Naive thymus-derived CD4-positive, alpha-beta T cell (primary cell): ENCODE measurements at regions of chr20 and their contacts with region 1.

Region 1: DNA sequence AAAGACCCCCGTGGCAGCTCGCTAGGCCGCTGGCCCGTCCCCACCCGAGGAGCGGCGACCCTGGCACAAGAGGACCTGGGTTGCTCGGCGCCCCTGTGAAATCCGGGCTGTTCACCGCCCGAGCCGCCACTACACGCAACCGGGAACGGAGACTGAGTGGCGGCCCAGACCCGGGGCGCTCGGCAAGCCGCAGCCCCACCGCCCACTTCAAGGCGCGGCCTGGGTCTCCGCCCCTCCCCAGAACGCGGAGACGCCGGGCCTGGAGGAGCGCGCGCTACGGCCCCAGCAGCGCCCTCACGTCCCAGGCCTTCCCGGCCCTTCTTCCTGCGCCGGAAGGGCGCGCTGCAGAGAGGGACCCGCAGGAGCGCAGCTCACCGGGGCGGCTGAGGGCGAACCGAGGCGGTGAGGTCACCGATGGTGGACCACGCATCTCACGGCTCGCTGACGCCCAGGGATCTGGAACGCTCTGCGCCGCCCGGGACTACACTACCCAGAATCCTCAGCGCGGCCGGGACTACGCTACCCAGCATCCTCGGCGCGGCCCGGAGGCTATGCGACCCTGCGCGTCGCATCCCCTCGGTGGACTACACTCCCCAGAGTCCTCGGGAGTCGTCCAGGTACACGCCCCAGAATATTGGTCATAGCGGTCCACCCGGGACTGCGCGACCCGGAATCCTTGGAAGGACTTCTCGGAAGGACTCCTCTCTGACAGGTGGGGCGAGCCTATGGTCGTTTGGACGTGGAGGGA is at the start of gene ZNF337:
- DNase-seq: peak; percentile 84 to 94 (median 89)
- ATAC-seq: peak; percentile 100
- H3K4me3 ChIP-seq: peak within 1 kb of the TSS; percentile 85
- H3K4me3 Mint-ChIP-seq: peak within 1 kb of the TSS; percentile 94 to 97 (median 96)
- H3K27ac ChIP-seq: peak within 1 kb of the TSS; percentile 85
- H3K27ac Mint-ChIP-seq: peak within 1 kb of the TSS; percentile 84 to 96 (median 93)
- H3K4me1 ChIP-seq: peaks cover 5 to 9% of the 10 kb centered on the region in 2 donors
- H3K4me1 Mint-ChIP-seq: peaks cover 19 to 58% (median 57%) of the 10 kb centered on the region in 7 donors
- H3K27me3 ChIP-seq: no peaks in the 10 kb centered on the region
- H3K27me3 Mint-ChIP-seq: peaks cover 0 to 5% (median 0%) of the 10 kb centered on the region in 5 donors
- total RNA-seq, gene ZNF337: 18.7 to 39.8 (median 21.2) TPM

Region 2: DNA sequence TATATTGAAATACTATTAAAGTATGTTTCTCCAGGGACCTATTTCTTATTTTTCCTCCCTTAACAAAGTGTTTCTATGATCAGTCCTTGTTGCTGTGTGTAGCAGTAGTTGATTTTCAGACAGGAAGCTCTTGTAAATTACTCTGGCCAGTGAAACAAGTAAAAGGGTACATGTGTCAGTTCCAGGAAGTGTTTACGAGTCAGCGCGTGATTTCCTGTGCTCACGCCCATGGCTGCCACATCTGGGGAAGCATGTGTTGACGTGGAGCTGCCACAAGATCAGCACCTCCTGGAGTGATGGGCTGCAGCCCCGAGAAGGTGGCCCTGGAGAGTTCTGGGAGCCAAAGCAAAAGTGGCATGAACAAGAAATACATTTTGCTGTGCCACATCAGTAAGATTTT is 1669.3 kb before region 1 on chr20:
- CTCF ChIA-PET with region 1: no interaction called
- POLR2A ChIA-PET with region 1: no interaction called
- intact Hi-C with region 1: loop called in 1 of 2 experiments (anchors 5 kb)
- DNase-seq: peak; percentile 45 to 93 (median 87)
- ATAC-seq: peak; percentile 99
- H3K4me3 ChIP-seq: peak overlapping the region; percentile 39
- H3K4me3 Mint-ChIP-seq: peak overlapping the region; percentile 26 to 81 (median 71)
- H3K27ac ChIP-seq: peak overlapping the region; percentile 83
- H3K27ac Mint-ChIP-seq: peak overlapping the region; percentile 95 to 99 (median 97)
- H3K4me1 ChIP-seq: peaks cover 17 to 29% of the 10 kb centered on the region in 2 donors
- H3K4me1 Mint-ChIP-seq: peaks cover 20 to 76% (median 62%) of the 10 kb centered on the region in 7 donors
- H3K27me3 ChIP-seq: no peaks in the 10 kb centered on the region
- H3K27me3 Mint-ChIP-seq: no peaks in the 10 kb centered on the region

Region 3: DNA sequence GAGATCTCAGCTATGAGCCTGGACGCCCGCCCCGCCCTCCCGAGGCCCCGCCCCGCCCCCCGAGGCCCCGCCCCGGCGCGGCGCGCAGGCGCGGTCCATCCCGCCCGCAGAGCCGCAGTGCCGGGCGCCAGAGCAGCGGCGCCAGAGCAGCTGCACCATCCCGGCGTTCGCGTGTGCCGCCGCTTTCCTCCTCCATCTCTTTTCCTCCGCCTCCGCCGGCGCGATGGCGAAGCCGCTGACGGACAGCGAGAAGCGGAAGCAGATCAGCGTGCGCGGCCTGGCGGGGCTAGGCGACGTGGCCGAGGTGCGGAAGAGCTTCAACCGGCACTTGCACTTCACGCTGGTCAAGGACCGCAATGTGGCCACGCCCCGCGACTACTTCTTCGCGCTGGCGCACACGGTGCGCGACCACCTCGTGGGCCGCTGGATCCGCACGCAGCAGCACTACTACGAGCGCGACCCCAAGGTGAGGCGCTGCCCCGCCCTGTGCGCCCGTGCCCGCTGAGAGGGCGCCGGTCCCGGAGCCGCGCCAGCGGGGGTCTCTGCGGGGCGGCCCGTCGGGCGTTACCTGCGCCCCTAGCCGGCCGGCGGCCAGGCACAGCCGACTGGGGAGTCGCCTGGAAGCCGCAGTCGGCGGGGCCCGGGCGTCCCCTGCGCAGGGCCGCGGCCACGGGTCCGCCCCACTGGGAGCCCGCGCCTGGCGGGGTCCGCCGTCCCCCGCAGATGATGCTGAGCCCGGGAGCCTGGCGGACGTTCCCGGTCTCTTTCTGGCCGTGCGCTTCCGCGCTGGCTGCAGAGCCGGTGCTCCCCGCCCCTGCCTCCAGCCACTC is 448.4 kb before region 1 on chr20 and contains the start of gene PYGB:
- CTCF ChIA-PET with region 1: no interaction called
- POLR2A ChIA-PET with region 1: no interaction called
- intact Hi-C with region 1: loop called (anchors 5 kb)
- DNase-seq: peak; percentile 52 to 84 (median 68)
- ATAC-seq: peak; percentile 95
- H3K4me3 ChIP-seq: peak within 1 kb of the TSS; percentile 93
- H3K4me3 Mint-ChIP-seq: peak within 1 kb of the TSS; percentile 85 to 99 (median 94)
- H3K27ac ChIP-seq: peak within 1 kb of the TSS; percentile 75
- H3K27ac Mint-ChIP-seq: peak within 1 kb of the TSS; percentile 79 to 97 (median 87)
- H3K4me1 ChIP-seq: peaks cover 5 to 7% of the 10 kb centered on the region in 2 donors
- H3K4me1 Mint-ChIP-seq: peaks cover 19 to 60% (median 49%) of the 10 kb centered on the region in 7 donors
- H3K27me3 ChIP-seq: no peaks in the 10 kb centered on the region
- H3K27me3 Mint-ChIP-seq: peaks cover 0 to 13% (median 0%) of the 10 kb centered on the region in 5 donors
- total RNA-seq, gene PYGB: 29.8 to 45.2 (median 43.6) TPM

Region 4: GRCh38 chr20:25407311-25408169 is 289.0 kb before region 1 on chr20 and contains the start of gene GINS1:
- CTCF ChIA-PET with region 1: no interaction called
- POLR2A ChIA-PET with region 1: no interaction called
- intact Hi-C with region 1: loop called in 1 of 2 experiments (anchors 1 kb)
- DNase-seq: peak; percentile 56 to 92 (median 69)
- ATAC-seq: peak; percentile 94
- H3K4me3 ChIP-seq: peak within 1 kb of the TSS; percentile 75
- H3K4me3 Mint-ChIP-seq: peak within 1 kb of the TSS; percentile 77 to 95 (median 92)
- H3K27ac ChIP-seq: peak within 1 kb of the TSS; percentile 57
- H3K27ac Mint-ChIP-seq: peak within 1 kb of the TSS; percentile 28 to 93 (median 80)
- H3K4me1 ChIP-seq: peaks cover 6 to 11% of the 10 kb centered on the region in 2 donors
- H3K4me1 Mint-ChIP-seq: peaks cover 4 to 25% (median 13%) of the 10 kb centered on the region in 7 donors
- H3K27me3 ChIP-seq: no peaks in the 10 kb centered on the region
- H3K27me3 Mint-ChIP-seq: no peaks in the 10 kb centered on the region
- total RNA-seq, gene GINS1: 0.44 to 24.9 (median 0.81) TPM

Region 5: GRCh38 chr20:25623736-25624499 is 72.6 kb before region 1 on chr20 and contains the start of gene NANP:
- CTCF ChIA-PET with region 1: no interaction called
- POLR2A ChIA-PET with region 1: interaction called, 5 read pairs
- intact Hi-C with region 1: loop called (anchors 1 kb)
- DNase-seq: peak; percentile 62 to 92 (median 73)
- ATAC-seq: peak; percentile 86
- H3K4me3 ChIP-seq: peak within 1 kb of the TSS; percentile 96
- H3K4me3 Mint-ChIP-seq: peak within 1 kb of the TSS; percentile 86 to 96 (median 94)
- H3K27ac ChIP-seq: peak within 1 kb of the TSS; percentile 70
- H3K27ac Mint-ChIP-seq: peak within 1 kb of the TSS; percentile 78 to 96 (median 90)
- H3K4me1 ChIP-seq: peaks cover 0 to 12% of the 10 kb centered on the region in 2 donors
- H3K4me1 Mint-ChIP-seq: peaks cover 14 to 34% (median 18%) of the 10 kb centered on the region in 7 donors
- H3K27me3 ChIP-seq: no peaks in the 10 kb centered on the region
- H3K27me3 Mint-ChIP-seq: peaks cover 0 to 3% (median 0%) of the 10 kb centered on the region in 5 donors
- total RNA-seq, gene NANP: 1.0 to 7.0 (median 1.9) TPM

Region 6: GRCh38 chr20:25720294-25720693 is 23.7 kb after region 1 on chr20:
- CTCF ChIA-PET with region 1: no interaction called
- POLR2A ChIA-PET with region 1: interaction called, 3 read pairs
- intact Hi-C with region 1: loop called (anchors 1 to 2 kb)
- DNase-seq: no peak
- ATAC-seq: no peak
- H3K4me3 ChIP-seq: no peak overlapping the region
- H3K4me3 Mint-ChIP-seq: no peak overlapping the region
- H3K27ac ChIP-seq: no peak overlapping the region
- H3K27ac Mint-ChIP-seq: peak overlapping the region in 4 of 9 donors; percentile 84 to 93 (median 92)
- H3K4me1 ChIP-seq: peaks cover 3 to 14% of the 10 kb centered on the region in 2 donors
- H3K4me1 Mint-ChIP-seq: peaks cover 4 to 37% (median 22%) of the 10 kb centered on the region in 7 donors
- H3K27me3 ChIP-seq: no peaks in the 10 kb centered on the region
- H3K27me3 Mint-ChIP-seq: no peaks in the 10 kb centered on the region

Region 7: GRCh38 chr20:25859649-25860530 is 163.3 kb after region 1 on chr20:
- CTCF ChIA-PET with region 1: no interaction called
- POLR2A ChIA-PET with region 1: no interaction called
- intact Hi-C with region 1: loop called in 1 of 2 experiments (anchors 1 kb)
- DNase-seq: peak; percentile 67 to 85 (median 77)
- ATAC-seq: peak; percentile 69
- H3K4me3 ChIP-seq: no peak overlapping the region
- H3K4me3 Mint-ChIP-seq: peak overlapping the region; percentile 72 to 97 (median 82)
- H3K27ac ChIP-seq: no peak overlapping the region
- H3K27ac Mint-ChIP-seq: peak overlapping the region in 1 of 9 donors; percentile 6
- H3K4me1 ChIP-seq: peaks cover 11 to 25% of the 10 kb centered on the region in 2 donors
- H3K4me1 Mint-ChIP-seq: peaks cover 37 to 70% (median 45%) of the 10 kb centered on the region in 7 donors
- H3K27me3 ChIP-seq: peaks cover 0 to 15% of the 10 kb centered on the region in 2 donors
- H3K27me3 Mint-ChIP-seq: peaks cover 49 to 90% (median 72%) of the 10 kb centered on the region in 5 donors